ENCODE measurements at regions of chr2 and their contacts with region 1.

Region 1: GRCh38 chr2:84495539-84496146 is 20.7 kb upstream of the DNAH6 start:
- DNase-seq: no peak
- ATAC-seq: peak in 3 of 4 donors; percentile 70 to 81 (median 71)
- H3K4me3 ChIP-seq: no peak overlapping the region
- H3K27ac ChIP-seq: no peak overlapping the region
- H3K4me1 ChIP-seq: peaks cover 0 to 3% (median 0%) of the 10 kb centered on the region in 12 donors
- H3K27me3 ChIP-seq: peaks cover 0 to 4% (median 0%) of the 10 kb centered on the region in 9 donors
- CTCF ChIP-seq: peak; percentile 52 to 81 (median 73)
- POLR2A ChIP-seq: no peak

Region 2: GRCh38 chr2:84619794-84620371 is 124.2 kb after region 1 on chr2:
- intact Hi-C with region 1: no loop called
- DNase-seq: no peak
- ATAC-seq: no peak
- H3K4me3 ChIP-seq: no peak overlapping the region
- H3K27ac ChIP-seq: no peak overlapping the region
- H3K4me1 ChIP-seq: no peaks in the 10 kb centered on the region
- H3K27me3 ChIP-seq: no peaks in the 10 kb centered on the region
- CTCF ChIP-seq: no peak
- POLR2A ChIP-seq: no peak

Region 3: GRCh38 chr2:84631047-84631446 is 135.4 kb after region 1 on chr2:
- intact Hi-C with region 1: loop called (anchors 2 to 5 kb)
- DNase-seq: no peak
- ATAC-seq: peak in 1 of 4 donors; percentile 64
- H3K4me3 ChIP-seq: no peak overlapping the region
- H3K27ac ChIP-seq: no peak overlapping the region
- H3K4me1 ChIP-seq: no peaks in the 10 kb centered on the region
- H3K27me3 ChIP-seq: no peaks in the 10 kb centered on the region
- CTCF ChIP-seq: peak; percentile 17 to 65 (median 42)
- POLR2A ChIP-seq: no peak

Region 4: GRCh38 chr2:84865181-84865783 is 369.6 kb after region 1 on chr2:
- intact Hi-C with region 1: loop called in 7 of 10 experiments (anchors 1 to 5 kb)
- DNase-seq: no peak
- ATAC-seq: no peak
- H3K4me3 ChIP-seq: no peak overlapping the region
- H3K27ac ChIP-seq: no peak overlapping the region
- H3K4me1 ChIP-seq: no peaks in the 10 kb centered on the region
- H3K27me3 ChIP-seq: no peaks in the 10 kb centered on the region
- CTCF ChIP-seq: peak in 10 of 12 donors; percentile 4 to 47 (median 36)
- POLR2A ChIP-seq: no peak

Region 5: GRCh38 chr2:84870306-84870705 is 374.7 kb after region 1 on chr2:
- intact Hi-C with region 1: loop called in 3 of 10 experiments (anchors 1 to 5 kb)
- DNase-seq: no peak
- ATAC-seq: no peak
- H3K4me3 ChIP-seq: no peak overlapping the region
- H3K27ac ChIP-seq: no peak overlapping the region
- H3K4me1 ChIP-seq: no peaks in the 10 kb centered on the region
- H3K27me3 ChIP-seq: no peaks in the 10 kb centered on the region
- CTCF ChIP-seq: no peak
- POLR2A ChIP-seq: no peak

Region 6: GRCh38 chr2:84881581-84882414 is 386.2 kb after region 1 on chr2:
- intact Hi-C with region 1: loop called (anchors 1 to 5 kb)
- DNase-seq: peak; percentile 74 to 83 (median 79)
- ATAC-seq: peak; percentile 81 to 89 (median 84)
- H3K4me3 ChIP-seq: peak overlapping the region; percentile 27 to 70 (median 53)
- H3K27ac ChIP-seq: no peak overlapping the region
- H3K4me1 ChIP-seq: peaks cover 9 to 28% (median 19%) of the 10 kb centered on the region in 12 donors
- H3K27me3 ChIP-seq: peaks cover 0 to 25% (median 15%) of the 10 kb centered on the region in 9 donors
- CTCF ChIP-seq: peak; percentile 55 to 83 (median 71)
- POLR2A ChIP-seq: no peak

Measured in heart left ventricle (tissue), 16 donors.